ENCODE measurements at regions of chr3 and their contacts with region 1.

Region 1: DNA sequence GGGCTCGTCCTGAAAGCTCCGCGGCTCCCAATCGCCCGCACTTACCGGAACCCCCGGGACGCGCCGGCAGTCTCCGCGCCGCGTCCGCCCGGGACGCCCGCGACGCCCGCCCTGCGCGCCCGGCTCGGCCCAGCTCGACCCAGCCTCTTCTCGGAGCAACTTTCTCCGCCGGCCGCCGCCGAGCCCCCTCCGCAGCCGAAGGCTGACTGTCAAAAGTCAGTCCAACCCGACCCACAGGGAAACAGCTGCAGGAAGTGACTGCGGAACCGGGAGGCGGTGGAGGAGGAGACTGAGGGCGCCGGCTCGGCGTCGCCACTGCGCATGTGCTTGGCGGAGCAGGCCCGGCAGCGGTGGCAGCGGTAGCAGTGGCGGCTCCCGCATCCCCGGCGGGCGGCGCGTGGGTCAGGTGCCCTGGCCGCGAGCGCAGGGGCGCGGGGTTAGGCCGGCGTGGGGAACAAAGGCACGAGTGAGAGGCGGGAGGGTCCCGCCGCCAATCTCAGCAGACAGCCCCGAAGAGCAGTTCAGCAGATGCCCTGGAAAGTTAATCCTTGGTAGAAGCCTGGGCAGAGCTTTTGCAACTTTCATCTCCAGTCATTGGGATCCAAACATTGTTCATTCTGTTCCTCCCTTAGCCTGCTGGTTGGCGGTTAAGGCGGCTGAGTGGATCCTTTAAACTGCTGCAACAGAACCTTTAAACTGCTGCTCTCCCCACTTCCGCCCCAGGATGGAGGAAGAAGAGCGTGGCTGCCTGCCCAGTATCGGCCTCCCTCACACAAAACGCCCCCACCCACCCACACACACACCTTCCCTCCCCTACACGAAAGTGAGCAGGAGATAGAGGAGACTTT is at the start of gene ZMAT3:
- DNase-seq: peak; percentile 84 to 91 (median 86)
- H3K4me3 ChIP-seq: peak within 1 kb of the TSS; percentile 79 to 81
- H3K4me3 Mint-ChIP-seq: peak within 1 kb of the TSS; percentile 94 to 98 (median 97)
- H3K27ac ChIP-seq: peak within 1 kb of the TSS; percentile 77
- H3K27ac Mint-ChIP-seq: peak within 1 kb of the TSS; percentile 93 to 98 (median 95)
- H3K4me1 ChIP-seq: peaks cover 53% of the 10 kb centered on the region
- H3K4me1 Mint-ChIP-seq: peaks cover 41 to 67% (median 56%) of the 10 kb centered on the region in 4 donors
- H3K27me3 ChIP-seq: no peaks in the 10 kb centered on the region
- H3K27me3 Mint-ChIP-seq: no peaks in the 10 kb centered on the region
- total RNA-seq, gene ZMAT3: 18.5 to 20.0 TPM

Region 2: GRCh38 chr3:179037351-179037750 is 34.4 kb before region 1 on chr3:
- CTCF ChIA-PET with region 1: interaction called, 17 read pairs
- POLR2A ChIA-PET with region 1: interaction called, 44 read pairs
- intact Hi-C with region 1: loop called (anchors 5 kb)
- DNase-seq: peak; percentile 61 to 71 (median 65)
- H3K4me3 ChIP-seq: peak overlapping the region in 1 of 2 donors; percentile 27
- H3K4me3 Mint-ChIP-seq: peak overlapping the region in 7 of 8 donors; percentile 47 to 79 (median 75)
- H3K27ac ChIP-seq: peak overlapping the region; percentile 24
- H3K27ac Mint-ChIP-seq: peak overlapping the region in 1 of 7 donors; percentile 90
- H3K4me1 ChIP-seq: peaks cover 43% of the 10 kb centered on the region
- H3K4me1 Mint-ChIP-seq: peaks cover 11 to 23% (median 15%) of the 10 kb centered on the region in 4 donors
- H3K27me3 ChIP-seq: no peaks in the 10 kb centered on the region
- H3K27me3 Mint-ChIP-seq: no peaks in the 10 kb centered on the region

Region 3: GRCh38 chr3:179083977-179084376 is 12.2 kb after region 1 on chr3:
- CTCF ChIA-PET with region 1: interaction called, 8 read pairs
- POLR2A ChIA-PET with region 1: interaction called, 21 read pairs
- intact Hi-C with region 1: no loop called
- DNase-seq: no peak
- H3K4me3 ChIP-seq: no peak overlapping the region
- H3K4me3 Mint-ChIP-seq: peak overlapping the region; percentile 3 to 68 (median 55)
- H3K27ac ChIP-seq: no peak overlapping the region
- H3K27ac Mint-ChIP-seq: peak overlapping the region in 6 of 7 donors; percentile 4 to 85 (median 53)
- H3K4me1 ChIP-seq: peaks cover 13% of the 10 kb centered on the region
- H3K4me1 Mint-ChIP-seq: peaks cover 10 to 11% (median 10%) of the 10 kb centered on the region in 4 donors
- H3K27me3 ChIP-seq: no peaks in the 10 kb centered on the region
- H3K27me3 Mint-ChIP-seq: no peaks in the 10 kb centered on the region

Region 4: GRCh38 chr3:179108086-179108485 is 36.3 kb after region 1 on chr3:
- CTCF ChIA-PET with region 1: interaction called, 4 read pairs
- POLR2A ChIA-PET with region 1: no interaction called
- intact Hi-C with region 1: loop called (anchors 5 kb)
- DNase-seq: no peak
- H3K4me3 ChIP-seq: no peak overlapping the region
- H3K4me3 Mint-ChIP-seq: no peak overlapping the region
- H3K27ac ChIP-seq: no peak overlapping the region
- H3K27ac Mint-ChIP-seq: no peak overlapping the region
- H3K4me1 ChIP-seq: no peaks in the 10 kb centered on the region
- H3K4me1 Mint-ChIP-seq: peaks cover 0 to 2% (median 1%) of the 10 kb centered on the region in 4 donors
- H3K27me3 ChIP-seq: peaks cover 4% of the 10 kb centered on the region
- H3K27me3 Mint-ChIP-seq: peaks cover 4 to 7% of the 10 kb centered on the region in 2 donors

Region 5: GRCh38 chr3:179562591-179563270 is 491.0 kb after region 1 on chr3 and contains the start of gene ACTL6A:
- CTCF ChIA-PET with region 1: no interaction called
- POLR2A ChIA-PET with region 1: interaction called, 10 read pairs
- intact Hi-C with region 1: loop called (anchors 2 kb)
- DNase-seq: peak; percentile 96 to 98 (median 96)
- H3K4me3 ChIP-seq: peak within 1 kb of the TSS; percentile 67 to 76
- H3K4me3 Mint-ChIP-seq: peak within 1 kb of the TSS; percentile 96 to 100 (median 99)
- H3K27ac ChIP-seq: peak within 1 kb of the TSS; percentile 58
- H3K27ac Mint-ChIP-seq: peak within 1 kb of the TSS; percentile 81 to 98 (median 97)
- H3K4me1 ChIP-seq: peaks cover 29% of the 10 kb centered on the region
- H3K4me1 Mint-ChIP-seq: peaks cover 22 to 37% (median 28%) of the 10 kb centered on the region in 4 donors
- H3K27me3 ChIP-seq: no peaks in the 10 kb centered on the region
- H3K27me3 Mint-ChIP-seq: peaks cover 0 to 4% of the 10 kb centered on the region in 2 donors
- total RNA-seq, gene ACTL6A: 56.9 to 62.4 TPM